Vagina (tissue), 2 donors: ENCODE measurements at regions of chr11 and their contacts with region 1.

Region 1: GRCh38 chr11:106021967-106022794 is at the start of gene MSANTD4:
- DNase-seq: peak; percentile 99 to 100
- H3K4me3 ChIP-seq: peak within 1 kb of the TSS; percentile 79 to 86
- H3K27ac ChIP-seq: peak within 1 kb of the TSS; percentile 80
- H3K4me1 ChIP-seq: peaks cover 29% of the 10 kb centered on the region
- H3K27me3 ChIP-seq: no peaks in the 10 kb centered on the region
- CTCF ChIP-seq: peak in 1 of 3 experiments; percentile 11
- POLR2A ChIP-seq: peak in 1 of 2 donors; percentile 39
- total RNA-seq, gene MSANTD4: 29.5 TPM

Region 2: GRCh38 chr11:106076919-106077608 is 54.9 kb after region 1 on chr11 and contains the start of gene KBTBD3:
- intact Hi-C with region 1: loop called (anchors 1 kb)
- DNase-seq: peak; percentile 98 to 100
- H3K4me3 ChIP-seq: peak within 1 kb of the TSS; percentile 84 to 91
- H3K27ac ChIP-seq: peak within 1 kb of the TSS; percentile 96
- H3K4me1 ChIP-seq: peaks cover 47% of the 10 kb centered on the region
- H3K27me3 ChIP-seq: no peaks in the 10 kb centered on the region
- CTCF ChIP-seq: peak in 1 of 3 experiments; percentile 6
- POLR2A ChIP-seq: peak in 1 of 2 donors; percentile 89
- total RNA-seq, gene KBTBD3: 3.2 TPM